ENCODE measurements at regions of chr4 and their contacts with region 1.

Region 1: GRCh38 chr4:57163530-57164459 is 53.6 kb upstream of the IGFBP7 start:
- DNase-seq: peak; percentile 86
- ATAC-seq: peak; percentile 97
- H3K4me3 Mint-ChIP-seq: peak overlapping the region; percentile 73
- H3K27ac Mint-ChIP-seq: peak overlapping the region; percentile 47
- H3K4me1 Mint-ChIP-seq: peaks cover 10% of the 10 kb centered on the region
- H3K27me3 Mint-ChIP-seq: peaks cover 15% of the 10 kb centered on the region

Region 2: GRCh38 chr4:57037982-57038604 is 125.7 kb before region 1 on chr4:
- CTCF ChIA-PET with region 1: interaction called, 4 read pairs
- POLR2A ChIA-PET with region 1: no interaction called
- intact Hi-C with region 1: loop called in 1 of 2 experiments (anchors 5 kb)
- DNase-seq: peak; percentile 61
- ATAC-seq: no peak
- H3K4me3 Mint-ChIP-seq: no peak overlapping the region
- H3K27ac Mint-ChIP-seq: no peak overlapping the region
- H3K4me1 Mint-ChIP-seq: no peaks in the 10 kb centered on the region
- H3K27me3 Mint-ChIP-seq: peaks cover 10% of the 10 kb centered on the region

Region 3: GRCh38 chr4:57182132-57182874 is 18.5 kb after region 1 on chr4:
- CTCF ChIA-PET with region 1: interaction called, 15 read pairs
- POLR2A ChIA-PET with region 1: no interaction called
- intact Hi-C with region 1: no loop called
- DNase-seq: no peak
- ATAC-seq: no peak
- H3K4me3 Mint-ChIP-seq: no peak overlapping the region
- H3K27ac Mint-ChIP-seq: no peak overlapping the region
- H3K4me1 Mint-ChIP-seq: no peaks in the 10 kb centered on the region
- H3K27me3 Mint-ChIP-seq: peaks cover 6% of the 10 kb centered on the region

Region 4: DNA sequence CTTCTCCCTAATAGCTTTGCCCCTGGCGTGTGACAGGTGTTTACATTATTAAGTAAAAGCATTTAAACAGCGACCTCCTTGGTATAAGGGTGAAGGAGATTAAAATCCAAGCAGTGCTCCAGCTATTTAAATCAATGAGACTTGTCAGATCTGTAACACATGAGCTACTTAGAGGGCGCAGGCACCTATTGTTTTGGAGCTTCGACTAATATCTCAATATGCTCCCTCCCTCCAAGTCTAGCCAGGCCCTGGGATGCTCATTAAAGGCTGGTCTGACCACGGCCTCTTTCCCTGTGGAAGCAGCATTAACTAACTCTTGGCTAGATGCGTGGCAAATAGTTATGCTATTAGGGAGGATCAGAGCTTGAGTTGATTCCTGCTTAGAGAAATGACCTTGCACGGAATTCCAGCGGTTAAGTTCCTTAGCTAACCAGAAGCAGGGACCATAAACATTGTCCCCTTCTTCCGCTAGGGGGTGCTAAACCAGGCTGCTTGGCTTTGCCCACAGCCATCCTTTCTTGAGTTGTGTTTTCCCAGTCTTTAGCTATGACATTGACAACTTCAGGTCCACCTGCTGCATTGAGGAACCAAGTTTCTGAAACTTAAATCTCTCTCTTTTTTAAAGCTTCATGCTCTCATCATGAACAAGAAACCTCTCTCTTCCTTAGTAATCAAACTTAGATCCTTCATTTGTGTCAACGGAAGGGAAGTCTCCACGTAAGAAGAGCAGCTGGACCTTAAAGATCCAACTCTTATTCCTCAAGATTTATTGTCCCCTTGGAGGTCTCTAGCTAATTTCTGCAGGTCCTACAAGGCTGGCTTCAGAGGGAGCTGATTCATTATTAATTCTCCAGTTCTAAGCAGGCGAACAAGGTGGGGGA is 27.0 kb after region 1 on chr4:
- CTCF ChIA-PET with region 1: interaction called, 27 read pairs
- POLR2A ChIA-PET with region 1: no interaction called
- intact Hi-C with region 1: no loop called
- DNase-seq: peak; percentile 50
- ATAC-seq: no peak
- H3K4me3 Mint-ChIP-seq: no peak overlapping the region
- H3K27ac Mint-ChIP-seq: no peak overlapping the region
- H3K4me1 Mint-ChIP-seq: peaks cover 3% of the 10 kb centered on the region
- H3K27me3 Mint-ChIP-seq: peaks cover 17% of the 10 kb centered on the region

Region 5: GRCh38 chr4:57426779-57427395 is 263.1 kb after region 1 on chr4:
- CTCF ChIA-PET with region 1: interaction called, 8 read pairs
- POLR2A ChIA-PET with region 1: no interaction called
- intact Hi-C with region 1: loop called in 1 of 2 experiments (anchors 2 kb)
- DNase-seq: peak; percentile 72
- ATAC-seq: no peak
- H3K4me3 Mint-ChIP-seq: no peak overlapping the region
- H3K27ac Mint-ChIP-seq: no peak overlapping the region
- H3K4me1 Mint-ChIP-seq: no peaks in the 10 kb centered on the region
- H3K27me3 Mint-ChIP-seq: no peaks in the 10 kb centered on the region

Region 6: DNA sequence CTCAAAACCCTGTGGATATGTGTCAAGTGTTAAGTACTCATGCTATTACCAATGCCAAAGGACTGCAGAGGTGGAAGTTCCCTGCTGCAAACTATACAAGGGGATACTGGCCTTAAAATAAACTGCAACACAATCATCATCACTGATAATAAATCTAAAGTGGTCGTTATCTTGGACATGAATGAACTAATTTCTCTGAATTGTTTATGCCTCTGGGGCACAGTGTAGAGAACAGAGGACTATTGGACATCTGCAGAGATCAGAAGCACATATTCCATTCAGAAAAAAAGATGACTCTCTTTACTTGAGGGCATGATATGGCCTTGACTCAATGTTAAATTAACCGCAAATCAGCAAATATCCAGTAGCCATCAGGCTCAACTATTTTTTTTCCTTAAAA is 489.0 kb after region 1 on chr4:
- CTCF ChIA-PET with region 1: no interaction called
- POLR2A ChIA-PET with region 1: no interaction called
- intact Hi-C with region 1: no loop called
- DNase-seq: no peak
- ATAC-seq: no peak
- H3K4me3 Mint-ChIP-seq: no peak overlapping the region
- H3K27ac Mint-ChIP-seq: no peak overlapping the region
- H3K4me1 Mint-ChIP-seq: no peaks in the 10 kb centered on the region
- H3K27me3 Mint-ChIP-seq: no peaks in the 10 kb centered on the region

Region 7: GRCh38 chr4:58061970-58062369 is 898.2 kb after region 1 on chr4:
- CTCF ChIA-PET with region 1: interaction called, 3 read pairs
- POLR2A ChIA-PET with region 1: no interaction called
- intact Hi-C with region 1: loop called in 1 of 2 experiments (anchors 5 kb)
- DNase-seq: no peak
- ATAC-seq: no peak
- H3K4me3 Mint-ChIP-seq: no peak overlapping the region
- H3K27ac Mint-ChIP-seq: no peak overlapping the region
- H3K4me1 Mint-ChIP-seq: no peaks in the 10 kb centered on the region
- H3K27me3 Mint-ChIP-seq: no peaks in the 10 kb centered on the region

Measured in activated CD4-positive, alpha-beta T cell treated with anti-CD3 and anti-CD28 coated beads for 36 hours (primary cell).